Colonic mucosa (tissue), 4 donors: ENCODE measurements at regions of chr12 and their contacts with region 1.

Region 1: DNA sequence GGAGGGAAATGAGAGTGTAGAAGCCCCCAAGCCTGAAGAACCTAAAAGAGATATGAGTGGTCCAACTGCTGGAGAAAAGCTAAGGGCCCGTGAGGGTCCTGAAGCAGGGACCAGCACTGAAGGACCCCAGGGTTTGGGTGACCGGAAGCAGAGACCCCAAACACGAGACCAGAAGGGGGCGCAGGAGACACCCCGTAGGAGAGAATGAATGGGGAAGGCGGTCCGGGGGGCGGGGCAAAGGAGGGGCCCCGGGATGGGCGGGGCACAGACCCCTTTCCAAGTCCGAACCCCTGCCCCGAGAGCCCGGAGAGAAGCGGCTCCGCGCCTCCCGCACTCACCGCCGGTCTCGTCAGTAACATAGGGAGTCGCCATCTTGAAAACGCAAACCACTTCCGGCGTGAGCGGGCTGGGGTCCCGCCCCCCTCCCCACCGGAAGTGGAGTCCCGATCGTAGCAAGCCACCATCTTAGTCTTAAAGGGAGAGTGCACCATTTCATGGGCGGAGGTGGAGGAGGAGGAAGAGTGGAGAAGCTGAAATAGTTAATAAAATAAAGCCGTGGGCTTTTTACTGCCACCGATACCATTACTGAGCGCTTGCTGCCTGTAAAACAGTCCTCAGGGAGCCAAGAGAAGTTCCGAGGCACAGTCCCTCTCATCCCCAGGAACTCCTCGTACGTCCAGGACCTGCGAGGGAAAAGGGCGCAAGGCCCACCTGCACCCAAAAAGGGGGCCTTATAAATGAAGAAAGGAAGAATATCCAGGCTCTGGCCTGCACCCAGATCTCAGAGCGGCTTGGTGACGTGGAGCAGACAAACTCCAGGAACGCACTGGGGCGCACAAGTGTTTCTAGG is 731 bp downstream of the PYM1 start:
- DNase-seq: peak; percentile 96
- H3K4me3 ChIP-seq: peak overlapping the region; percentile 83
- H3K27ac ChIP-seq: peak overlapping the region; percentile 99
- H3K4me1 ChIP-seq: peaks cover 29% of the 10 kb centered on the region
- H3K27me3 ChIP-seq: no peaks in the 10 kb centered on the region
- CTCF ChIP-seq: peak; percentile 67

Region 2: GRCh38 chr12:55829967-55830600 is 96.9 kb before region 1 on chr12:
- intact Hi-C with region 1: loop called (anchors 5 kb)
- DNase-seq: peak; percentile 59
- H3K4me3 ChIP-seq: peak overlapping the region; percentile 80
- H3K27ac ChIP-seq: peak overlapping the region; percentile 90
- H3K4me1 ChIP-seq: peaks cover 8% of the 10 kb centered on the region
- H3K27me3 ChIP-seq: no peaks in the 10 kb centered on the region
- CTCF ChIP-seq: no peak

Region 3: DNA sequence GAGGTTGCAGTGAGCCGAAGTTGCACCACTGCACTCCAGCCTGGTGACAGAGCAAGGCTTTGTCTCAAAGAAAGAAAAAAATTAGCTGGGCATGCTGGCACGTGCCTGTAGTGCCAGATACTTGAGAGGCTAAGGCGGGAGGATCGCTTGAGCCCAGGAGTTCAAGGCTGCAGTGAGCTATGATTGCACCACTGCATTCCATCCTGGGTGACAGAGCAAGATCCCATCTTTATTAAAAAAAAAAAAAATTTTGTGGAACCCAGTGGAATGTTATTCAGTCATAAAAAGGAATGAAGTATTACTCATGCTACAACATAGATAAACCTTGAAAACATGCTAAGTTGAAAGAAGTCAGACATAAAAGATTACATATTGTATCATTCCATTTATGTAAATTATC is 144.7 kb after region 1 on chr12:
- intact Hi-C with region 1: no loop called
- DNase-seq: no peak
- H3K4me3 ChIP-seq: no peak overlapping the region
- H3K27ac ChIP-seq: no peak overlapping the region
- H3K4me1 ChIP-seq: no peaks in the 10 kb centered on the region
- H3K27me3 ChIP-seq: no peaks in the 10 kb centered on the region
- CTCF ChIP-seq: no peak